CD4-positive, alpha-beta memory T cell (primary cell): ENCODE measurements at regions of chr1 and their contacts with region 1.

Region 1: GRCh38 chr1:61851849-61852669 is 109.8 kb downstream of the PATJ start:
- DNase-seq: peak; percentile 17 to 61 (median 48)
- H3K4me3 ChIP-seq: no peak overlapping the region
- H3K4me3 Mint-ChIP-seq: no peak overlapping the region
- H3K27ac ChIP-seq: no peak overlapping the region
- H3K27ac Mint-ChIP-seq: no peak overlapping the region
- H3K4me1 ChIP-seq: no peaks in the 10 kb centered on the region
- H3K4me1 Mint-ChIP-seq: peaks cover 0 to 2% (median under 1%) of the 10 kb centered on the region in 4 donors
- H3K27me3 ChIP-seq: no peaks in the 10 kb centered on the region
- H3K27me3 Mint-ChIP-seq: no peaks in the 10 kb centered on the region

Region 2: GRCh38 chr1:61453111-61453961 is 398.7 kb before region 1 on chr1:
- CTCF ChIA-PET with region 1: interaction called, 3 read pairs
- POLR2A ChIA-PET with region 1: no interaction called
- intact Hi-C with region 1: loop called (anchors 1 kb)
- DNase-seq: peak; percentile 58 to 72 (median 63)
- H3K4me3 ChIP-seq: no peak overlapping the region
- H3K4me3 Mint-ChIP-seq: peak overlapping the region in 2 of 8 donors; percentile 11 to 26
- H3K27ac ChIP-seq: no peak overlapping the region
- H3K27ac Mint-ChIP-seq: peak overlapping the region; percentile 32 to 91 (median 81)
- H3K4me1 ChIP-seq: no peaks in the 10 kb centered on the region
- H3K4me1 Mint-ChIP-seq: peaks cover 5 to 7% (median 5%) of the 10 kb centered on the region in 4 donors
- H3K27me3 ChIP-seq: no peaks in the 10 kb centered on the region
- H3K27me3 Mint-ChIP-seq: no peaks in the 10 kb centered on the region

Region 3: DNA sequence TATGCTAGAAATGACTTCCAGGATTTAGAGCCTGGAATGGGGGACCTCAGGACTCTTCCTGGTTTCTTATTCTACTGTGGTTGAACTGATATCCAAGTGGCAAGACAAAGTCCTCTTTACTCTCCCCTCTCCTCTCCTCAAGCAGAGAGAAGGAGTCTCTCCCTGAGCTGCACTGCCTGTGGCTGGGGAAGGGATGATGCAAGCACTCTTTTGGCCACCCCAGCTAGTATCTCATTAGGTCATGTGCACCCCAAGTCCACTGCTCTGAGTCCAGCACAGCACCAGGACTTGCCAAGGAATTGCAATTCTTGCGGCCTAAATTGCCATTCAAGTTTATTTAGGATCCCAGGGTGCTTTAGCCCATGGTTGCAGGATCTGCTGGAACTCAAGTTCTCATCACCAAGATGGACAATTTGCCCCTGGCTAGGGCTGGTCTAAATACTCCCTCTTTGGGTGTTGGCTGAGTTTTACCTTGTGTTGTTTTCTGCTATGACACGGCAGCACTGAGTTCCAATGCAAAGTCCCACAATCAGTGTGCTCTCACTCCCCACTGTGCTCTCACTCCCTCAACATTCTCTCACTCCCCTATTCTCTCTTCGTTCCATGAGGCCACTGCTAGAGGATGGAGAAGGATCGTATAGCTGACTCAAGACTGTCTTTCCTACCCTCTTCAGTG is 299.3 kb before region 1 on chr1:
- CTCF ChIA-PET with region 1: interaction called, 19 read pairs
- POLR2A ChIA-PET with region 1: no interaction called
- intact Hi-C with region 1: loop called (anchors 1 kb)
- DNase-seq: no peak
- H3K4me3 ChIP-seq: no peak overlapping the region
- H3K4me3 Mint-ChIP-seq: no peak overlapping the region
- H3K27ac ChIP-seq: no peak overlapping the region
- H3K27ac Mint-ChIP-seq: peak overlapping the region in 1 of 7 donors; percentile 1
- H3K4me1 ChIP-seq: no peaks in the 10 kb centered on the region
- H3K4me1 Mint-ChIP-seq: no peaks in the 10 kb centered on the region
- H3K27me3 ChIP-seq: no peaks in the 10 kb centered on the region
- H3K27me3 Mint-ChIP-seq: peaks cover 5 to 19% of the 10 kb centered on the region in 2 donors

Region 4: DNA sequence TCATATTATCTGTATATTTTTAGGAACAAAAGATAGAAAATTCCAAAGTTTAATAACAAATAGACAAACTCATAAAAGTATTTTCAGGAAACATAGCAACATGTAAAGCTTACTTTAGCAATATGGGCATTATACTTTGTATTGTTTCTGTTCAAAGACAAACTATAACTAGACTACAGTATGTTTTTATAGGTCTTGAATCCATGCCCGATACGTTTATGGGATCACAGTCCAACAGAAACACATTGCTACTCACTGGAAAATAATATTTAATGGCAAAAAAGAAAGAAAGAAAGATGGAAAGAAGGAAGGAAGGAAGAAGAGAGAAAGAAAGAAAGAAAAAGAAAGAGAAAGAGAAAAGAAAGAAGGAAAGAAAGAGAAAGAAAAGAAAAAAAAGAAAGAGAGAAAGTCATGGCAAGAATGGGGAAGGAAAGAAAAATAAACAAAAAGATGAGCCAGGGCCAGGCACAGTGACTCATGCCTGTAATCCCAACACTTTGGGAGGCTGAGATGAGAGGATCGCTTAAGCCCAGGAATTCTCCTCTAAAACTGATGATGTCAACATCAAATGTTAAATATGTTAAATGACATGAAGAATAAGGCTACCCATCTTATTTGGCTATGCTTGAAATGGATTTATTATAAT is 159.8 kb before region 1 on chr1:
- CTCF ChIA-PET with region 1: no interaction called
- POLR2A ChIA-PET with region 1: no interaction called
- intact Hi-C with region 1: loop called (anchors 10 kb)
- DNase-seq: no peak
- H3K4me3 ChIP-seq: no peak overlapping the region
- H3K4me3 Mint-ChIP-seq: no peak overlapping the region
- H3K27ac ChIP-seq: no peak overlapping the region
- H3K27ac Mint-ChIP-seq: peak overlapping the region in 2 of 7 donors; percentile 61 to 84
- H3K4me1 ChIP-seq: no peaks in the 10 kb centered on the region
- H3K4me1 Mint-ChIP-seq: peaks cover 0 to 3% (median 0%) of the 10 kb centered on the region in 4 donors
- H3K27me3 ChIP-seq: no peaks in the 10 kb centered on the region
- H3K27me3 Mint-ChIP-seq: no peaks in the 10 kb centered on the region